Breast epithelium (tissue), 4 donors: ENCODE measurements at regions of chr14 and their contacts with region 1.

Region 1: DNA sequence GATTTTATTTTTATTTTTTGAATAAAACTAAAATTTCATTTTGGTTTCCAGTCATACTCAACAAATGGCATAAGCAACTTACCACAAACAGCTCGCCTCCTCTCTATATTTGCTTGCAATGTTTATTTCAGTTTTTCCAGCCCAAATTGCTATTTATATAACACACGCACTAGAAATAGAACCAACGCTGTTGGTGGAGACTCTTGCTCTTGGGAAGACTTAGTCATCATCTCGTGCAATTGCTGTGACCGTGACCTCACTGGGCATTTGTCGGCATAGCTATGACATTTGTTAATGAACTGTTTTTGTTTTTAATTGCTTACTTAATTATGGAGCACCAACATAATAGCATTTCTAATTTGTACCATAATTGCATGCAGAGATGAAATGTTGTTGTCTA is 153.1 kb upstream of the OTX2 start:
- DNase-seq: no peak
- H3K4me3 ChIP-seq: no peak overlapping the region
- H3K27ac ChIP-seq: no peak overlapping the region
- H3K4me1 ChIP-seq: no peaks in the 10 kb centered on the region
- H3K27me3 ChIP-seq: no peaks in the 10 kb centered on the region
- CTCF ChIP-seq: no peak
- POLR2A ChIP-seq: no peak

Region 2: DNA sequence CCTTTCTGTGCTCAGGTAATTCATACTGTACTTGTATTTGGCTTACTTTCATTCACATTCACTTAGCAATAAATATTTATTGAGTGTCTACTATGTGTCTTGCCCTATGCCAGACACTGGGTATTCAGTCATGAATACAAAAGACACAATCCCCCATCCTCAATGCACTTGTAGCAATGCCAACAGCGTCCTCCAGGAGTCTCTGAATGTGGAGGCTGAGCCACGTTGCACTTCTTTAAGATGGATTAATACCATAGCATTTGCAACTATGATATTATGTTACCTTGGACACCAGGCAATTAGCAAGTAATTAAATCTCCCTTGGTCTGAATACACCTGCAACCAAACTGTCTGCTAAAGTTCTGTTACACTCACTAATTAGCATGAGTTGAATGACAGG is 211.9 kb before region 1 on chr14:
- intact Hi-C with region 1: no loop called
- DNase-seq: no peak
- H3K4me3 ChIP-seq: no peak overlapping the region
- H3K27ac ChIP-seq: no peak overlapping the region
- H3K4me1 ChIP-seq: no peaks in the 10 kb centered on the region
- H3K27me3 ChIP-seq: no peaks in the 10 kb centered on the region
- CTCF ChIP-seq: no peak
- POLR2A ChIP-seq: no peak

Region 3: DNA sequence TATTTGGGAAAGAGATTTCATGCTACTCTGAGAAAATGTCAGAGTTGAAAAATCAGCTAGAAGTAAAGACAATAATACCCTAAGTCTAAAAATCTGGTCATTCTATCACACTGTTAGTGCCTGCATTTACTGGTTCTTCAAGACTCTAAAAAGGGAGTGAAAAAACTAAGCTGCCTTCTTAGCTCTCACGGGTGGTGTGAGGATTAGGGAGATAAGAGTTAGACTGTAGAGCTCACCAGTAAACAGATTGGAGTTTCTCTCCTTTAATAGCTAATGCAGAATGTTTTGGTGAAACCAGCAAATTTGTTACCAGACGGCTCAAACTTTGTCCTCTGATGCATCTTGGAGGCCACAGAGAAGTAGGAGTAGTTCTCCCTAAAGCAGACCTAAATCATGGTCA is 18.1 kb before region 1 on chr14:
- intact Hi-C with region 1: loop called (anchors 1 kb)
- DNase-seq: no peak
- H3K4me3 ChIP-seq: no peak overlapping the region
- H3K27ac ChIP-seq: no peak overlapping the region
- H3K4me1 ChIP-seq: no peaks in the 10 kb centered on the region
- H3K27me3 ChIP-seq: peaks cover 0 to 4% of the 10 kb centered on the region in 2 donors
- CTCF ChIP-seq: no peak
- POLR2A ChIP-seq: no peak